ENCODE measurements at regions of chr10 and their contacts with region 1.

Region 1: DNA sequence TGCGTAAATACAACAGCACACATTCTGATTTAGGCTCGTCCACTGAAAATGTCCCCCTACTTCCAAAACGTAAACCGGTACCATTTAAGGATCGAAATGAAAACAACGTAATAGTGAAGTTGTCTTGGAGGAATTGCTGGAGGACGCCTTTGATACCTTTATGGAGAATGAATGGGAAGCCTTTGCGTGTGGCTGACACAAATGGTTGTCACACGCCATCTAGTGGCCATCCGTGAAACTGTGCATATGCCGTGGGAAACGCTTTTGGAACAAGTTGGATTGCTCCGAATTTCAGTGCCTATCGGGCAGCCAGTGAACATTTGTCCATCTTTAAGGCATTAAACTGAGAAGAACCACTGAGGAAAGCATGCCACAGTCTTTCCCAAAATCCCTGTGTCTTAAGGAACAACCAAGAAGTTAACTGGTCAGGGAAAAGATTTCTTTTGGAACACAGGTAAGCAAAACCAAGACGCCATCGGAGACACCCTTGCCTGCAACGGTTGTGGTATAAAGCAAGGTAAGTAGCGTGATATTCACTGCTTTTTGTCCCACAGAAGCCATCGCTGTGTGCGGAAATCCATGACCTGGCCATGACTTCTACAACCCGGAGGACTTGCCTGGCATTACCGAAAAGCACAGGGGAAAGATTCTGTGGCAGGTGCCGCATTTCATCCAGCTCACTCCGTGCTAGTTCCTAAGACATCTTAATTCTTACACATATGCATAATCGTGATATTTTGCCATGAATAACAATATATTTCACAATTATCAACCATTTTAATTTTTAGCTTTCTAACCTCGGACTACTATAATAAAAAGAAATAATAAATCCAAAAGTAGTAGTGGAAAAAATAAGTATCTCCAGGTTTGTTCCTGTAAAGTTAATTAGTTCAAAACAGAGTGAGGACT is 100.6 kb downstream of the FAM204A start:
- DNase-seq: peak; percentile 84
- ATAC-seq: peak; percentile 72

Region 2: DNA sequence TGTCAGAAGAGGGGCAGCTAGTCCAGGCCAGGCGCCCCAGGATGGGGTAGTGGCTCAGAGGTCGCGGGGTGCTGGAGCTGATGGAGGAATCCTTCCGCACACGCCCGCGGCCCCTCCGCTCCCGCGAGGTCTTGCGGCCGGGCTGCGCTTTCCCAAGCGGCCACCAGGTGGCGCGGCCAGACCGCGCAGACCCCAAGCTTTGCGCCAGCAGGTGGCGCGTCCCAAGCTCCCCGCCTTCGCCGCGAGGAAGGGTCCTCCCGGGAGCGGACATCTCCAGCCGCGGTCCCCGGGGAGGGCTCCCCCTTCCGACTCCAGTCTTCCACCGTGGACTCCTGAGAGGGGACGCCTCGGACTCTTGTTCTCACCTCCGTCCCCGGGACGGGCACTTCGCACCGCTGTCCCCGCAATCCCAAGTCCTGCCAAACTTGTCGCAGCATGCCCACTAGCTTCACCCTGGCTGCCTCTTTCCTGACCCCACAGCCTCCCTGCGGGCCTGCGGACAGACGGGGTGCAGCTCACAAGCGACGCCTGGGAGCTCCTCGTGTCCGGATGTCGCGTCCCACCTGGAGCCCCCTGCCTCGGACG is 1024.8 kb before region 1 on chr10:
- intact Hi-C with region 1: loop called (anchors 10 kb)
- DNase-seq: peak; percentile 85
- ATAC-seq: peak; percentile 92

Region 3: GRCh38 chr10:117496616-117497028 is 744.9 kb before region 1 on chr10:
- intact Hi-C with region 1: loop called (anchors 5 kb)
- DNase-seq: peak; percentile 84
- ATAC-seq: peak; percentile 91

Region 4: DNA sequence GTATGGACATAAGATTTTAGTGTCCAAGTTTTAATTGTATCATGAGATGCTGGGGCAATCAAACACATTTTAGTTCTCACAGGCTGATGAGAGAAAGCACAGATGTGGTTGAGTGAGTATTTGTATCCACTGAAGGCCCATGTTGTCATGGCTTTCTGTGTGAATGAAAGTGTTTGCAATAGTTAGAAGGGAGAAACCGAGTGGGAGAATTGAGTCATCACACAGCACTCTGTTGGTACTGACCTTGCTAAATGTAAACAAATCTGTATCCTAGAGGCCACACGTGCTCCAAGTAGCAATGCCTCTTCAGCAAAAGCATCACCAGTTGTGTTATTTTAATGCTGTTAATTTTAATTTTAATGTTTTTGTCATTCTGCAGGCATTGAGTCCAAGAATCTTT is 577.7 kb before region 1 on chr10:
- intact Hi-C with region 1: no loop called
- DNase-seq: no peak
- ATAC-seq: no peak

Region 5: GRCh38 chr10:118290471-118290995 is 49.0 kb after region 1 on chr10:
- intact Hi-C with region 1: no loop called
- DNase-seq: no peak
- ATAC-seq: no peak

Region 6: GRCh38 chr10:118321724-118322575 is 80.5 kb after region 1 on chr10:
- intact Hi-C with region 1: no loop called
- DNase-seq: no peak
- ATAC-seq: no peak